PC-9 (cell line): ENCODE measurements at regions of chr12 and their contacts with region 1.

Region 1: DNA sequence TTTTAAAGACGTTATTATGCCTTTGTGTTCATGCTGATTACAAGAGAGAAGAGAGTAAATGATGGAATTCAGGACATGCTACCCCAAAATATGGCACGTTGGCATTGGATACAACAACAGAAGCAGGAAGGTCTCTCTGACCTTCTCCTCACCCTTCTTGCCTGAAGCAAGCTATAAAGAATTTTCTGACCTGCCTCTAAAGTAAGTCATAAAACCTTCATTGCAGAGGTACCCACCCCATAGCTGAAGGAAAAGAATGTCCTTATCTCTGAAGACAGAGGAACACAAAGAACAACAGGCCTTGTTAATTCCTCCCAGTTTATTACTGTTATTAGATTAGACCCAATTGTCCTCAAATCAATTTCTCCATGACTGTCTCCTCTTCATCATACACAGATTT is 176.2 kb downstream of the FBXL14 start:
- DNase-seq: no peak
- H3K4me3 ChIP-seq: no peak overlapping the region
- H3K27ac ChIP-seq: no peak overlapping the region
- H3K4me1 ChIP-seq: no peaks in the 10 kb centered on the region
- H3K27me3 ChIP-seq: no peaks in the 10 kb centered on the region
- CTCF ChIP-seq: no peak

Region 2: GRCh38 chr12:1147821-1148220 is 270.3 kb before region 1 on chr12:
- CTCF ChIA-PET with region 1: interaction called, 13 read pairs
- POLR2A ChIA-PET with region 1: no interaction called
- intact Hi-C with region 1: no loop called
- DNase-seq: no peak
- H3K4me3 ChIP-seq: no peak overlapping the region
- H3K27ac ChIP-seq: no peak overlapping the region
- H3K4me1 ChIP-seq: no peaks in the 10 kb centered on the region
- H3K27me3 ChIP-seq: no peaks in the 10 kb centered on the region
- CTCF ChIP-seq: no peak

Region 3: DNA sequence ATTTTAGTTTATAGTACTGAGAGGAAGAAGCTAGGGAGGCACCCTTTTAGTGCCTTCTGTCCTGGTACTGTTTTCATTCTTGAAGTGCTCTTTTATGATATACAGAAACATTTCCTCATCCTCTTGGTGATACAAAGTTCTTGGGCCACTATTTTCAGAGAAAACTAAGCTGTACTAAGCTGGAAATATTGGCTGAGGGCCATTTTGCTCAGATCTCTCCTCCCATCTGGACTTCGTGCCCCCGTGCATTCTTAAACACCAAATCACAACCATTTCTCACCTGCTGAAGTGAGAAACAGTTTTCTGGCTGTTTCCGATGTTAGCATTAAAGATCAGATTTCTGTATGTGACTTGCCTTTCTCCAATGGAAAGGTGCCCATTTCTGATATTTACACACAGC is 17.3 kb after region 1 on chr12:
- CTCF ChIA-PET with region 1: no interaction called
- POLR2A ChIA-PET with region 1: no interaction called
- intact Hi-C with region 1: no loop called
- DNase-seq: no peak
- H3K4me3 ChIP-seq: no peak overlapping the region
- H3K27ac ChIP-seq: no peak overlapping the region
- H3K4me1 ChIP-seq: no peaks in the 10 kb centered on the region
- H3K27me3 ChIP-seq: no peaks in the 10 kb centered on the region
- CTCF ChIP-seq: no peak